ENCODE measurements at regions of chr10 and their contacts with region 1.

Region 1: GRCh38 chr10:124719213-124719851 is 24.8 kb downstream of the FAM53B start:
- DNase-seq: peak; percentile 79
- H3K4me3 Mint-ChIP-seq: peak overlapping the region; percentile 72
- H3K27ac Mint-ChIP-seq: peak overlapping the region; percentile 92
- H3K4me1 Mint-ChIP-seq: peaks cover 94% of the 10 kb centered on the region
- H3K27me3 Mint-ChIP-seq: no peaks in the 10 kb centered on the region

Region 2: DNA sequence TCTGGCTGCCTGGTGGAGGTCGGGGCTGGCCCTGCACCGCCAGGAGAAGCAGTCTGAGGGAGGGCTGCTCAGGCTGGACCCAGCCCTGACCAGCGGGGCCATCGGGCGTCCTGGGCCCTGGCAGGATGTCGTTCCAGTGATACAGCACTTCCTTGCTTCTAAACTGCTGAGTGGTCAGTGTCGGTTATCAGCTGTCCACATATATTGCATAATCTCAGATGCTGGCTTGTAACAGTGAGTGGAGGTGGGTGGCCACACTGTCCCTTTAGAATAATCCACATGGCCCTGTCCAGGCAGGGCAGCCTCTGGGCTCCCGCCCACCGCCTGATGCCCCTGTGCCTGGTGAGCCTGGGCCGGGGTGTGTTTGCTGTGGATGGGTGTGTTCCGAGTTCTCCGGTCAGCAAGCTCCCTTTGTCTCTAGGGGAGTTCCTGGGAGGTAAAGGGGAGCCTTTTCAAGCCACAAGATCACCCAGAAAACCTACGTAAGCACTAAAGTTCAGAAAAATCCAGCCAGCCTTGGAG is 171.6 kb before region 1 on chr10:
- CTCF ChIA-PET with region 1: no interaction called
- POLR2A ChIA-PET with region 1: no interaction called
- DNase-seq: no peak
- H3K4me3 Mint-ChIP-seq: no peak overlapping the region
- H3K27ac Mint-ChIP-seq: no peak overlapping the region
- H3K4me1 Mint-ChIP-seq: no peaks in the 10 kb centered on the region
- H3K27me3 Mint-ChIP-seq: no peaks in the 10 kb centered on the region

Region 3: DNA sequence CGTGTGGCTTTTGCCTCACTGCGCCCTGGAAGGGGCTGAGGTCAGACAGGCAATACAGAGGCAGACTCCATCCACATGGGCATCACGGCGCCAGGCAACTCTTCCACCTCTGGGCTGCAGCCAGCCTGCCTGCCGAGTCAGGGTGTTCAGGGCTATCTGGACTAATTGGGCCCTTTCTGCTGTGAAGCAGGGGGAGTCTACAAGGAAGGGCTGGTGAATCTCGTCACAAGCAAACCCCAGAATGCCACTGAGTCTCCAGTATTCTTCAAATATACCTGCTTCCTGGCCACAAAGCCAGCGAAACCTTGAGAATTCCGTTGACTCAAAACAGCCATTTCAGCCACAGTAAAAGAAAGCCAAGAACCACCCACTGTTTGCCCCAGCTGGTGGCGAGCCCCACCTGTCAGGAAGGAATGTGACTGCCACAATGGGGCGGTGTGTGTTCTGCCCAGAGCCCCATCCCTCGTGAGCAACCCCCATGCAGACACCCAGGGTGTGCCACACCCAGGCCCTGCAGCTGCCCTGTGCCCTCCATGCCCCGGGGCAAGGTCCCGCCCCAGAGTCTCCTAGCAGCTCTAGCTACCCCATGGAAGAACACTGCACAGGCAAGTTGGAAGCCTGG is 92.5 kb before region 1 on chr10:
- CTCF ChIA-PET with region 1: interaction called, 10 read pairs
- POLR2A ChIA-PET with region 1: interaction called, 11 read pairs
- DNase-seq: peak; percentile 69
- H3K4me3 Mint-ChIP-seq: peak overlapping the region; percentile 36
- H3K27ac Mint-ChIP-seq: peak overlapping the region; percentile 78
- H3K4me1 Mint-ChIP-seq: peaks cover 46% of the 10 kb centered on the region
- H3K27me3 Mint-ChIP-seq: no peaks in the 10 kb centered on the region

Region 4: GRCh38 chr10:124647421-124648130 is 71.8 kb before region 1 on chr10:
- CTCF ChIA-PET with region 1: interaction called, 55 read pairs
- POLR2A ChIA-PET with region 1: interaction called, 89 read pairs
- DNase-seq: peak; percentile 88
- H3K4me3 Mint-ChIP-seq: peak overlapping the region; percentile 69
- H3K27ac Mint-ChIP-seq: peak overlapping the region; percentile 95
- H3K4me1 Mint-ChIP-seq: peaks cover 90% of the 10 kb centered on the region
- H3K27me3 Mint-ChIP-seq: no peaks in the 10 kb centered on the region

Region 5: GRCh38 chr10:124671486-124672075 is 47.8 kb before region 1 on chr10:
- CTCF ChIA-PET with region 1: interaction called, 9 read pairs
- POLR2A ChIA-PET with region 1: interaction called, 11 read pairs
- DNase-seq: no peak
- H3K4me3 Mint-ChIP-seq: no peak overlapping the region
- H3K27ac Mint-ChIP-seq: peak overlapping the region; percentile 76
- H3K4me1 Mint-ChIP-seq: peaks cover 71% of the 10 kb centered on the region
- H3K27me3 Mint-ChIP-seq: no peaks in the 10 kb centered on the region

Region 6: GRCh38 chr10:124688889-124689670 is 30.3 kb before region 1 on chr10:
- CTCF ChIA-PET with region 1: interaction called, 64 read pairs
- POLR2A ChIA-PET with region 1: interaction called, 270 read pairs
- DNase-seq: peak; percentile 83
- H3K4me3 Mint-ChIP-seq: peak overlapping the region; percentile 26
- H3K27ac Mint-ChIP-seq: peak overlapping the region; percentile 94
- H3K4me1 Mint-ChIP-seq: peaks cover 84% of the 10 kb centered on the region
- H3K27me3 Mint-ChIP-seq: no peaks in the 10 kb centered on the region

Region 7: DNA sequence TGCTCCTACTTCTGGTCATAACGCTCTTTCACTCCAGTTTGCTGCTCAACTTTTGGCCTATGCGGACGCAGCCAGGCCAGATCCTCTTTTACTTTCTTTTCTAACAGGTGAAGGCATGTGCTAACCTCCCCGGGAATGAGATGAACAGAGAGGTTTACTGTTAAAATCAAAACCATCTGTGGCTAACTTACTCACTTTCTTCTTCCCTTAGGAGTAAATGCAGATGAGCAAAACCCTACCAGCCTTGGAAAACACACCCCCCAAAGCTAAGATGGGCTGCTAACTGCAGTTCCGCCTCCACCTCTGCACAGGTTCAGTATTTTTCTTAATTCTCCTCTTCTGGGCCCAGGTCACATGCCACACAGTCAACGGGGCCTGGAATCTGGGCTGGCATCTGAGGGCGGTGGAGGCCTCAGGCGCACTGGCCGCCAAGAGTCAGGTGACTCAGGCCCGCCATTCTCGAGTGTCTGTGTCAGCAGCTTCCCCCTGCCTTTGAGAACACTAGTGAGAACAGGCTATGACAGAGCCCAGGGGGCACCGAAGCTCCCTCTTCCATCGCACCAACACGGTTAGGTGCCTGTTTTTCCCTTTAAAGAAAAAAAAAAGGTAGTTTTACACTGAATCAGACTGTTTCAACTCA is 13.7 kb after region 1 on chr10:
- CTCF ChIA-PET with region 1: interaction called, 63 read pairs
- POLR2A ChIA-PET with region 1: interaction called, 238 read pairs
- DNase-seq: peak; percentile 72
- H3K4me3 Mint-ChIP-seq: peak overlapping the region; percentile 66
- H3K27ac Mint-ChIP-seq: peak overlapping the region; percentile 88
- H3K4me1 Mint-ChIP-seq: peaks cover 97% of the 10 kb centered on the region
- H3K27me3 Mint-ChIP-seq: no peaks in the 10 kb centered on the region